ENCODE measurements at regions of chr15 and their contacts with region 1.

Region 1: DNA sequence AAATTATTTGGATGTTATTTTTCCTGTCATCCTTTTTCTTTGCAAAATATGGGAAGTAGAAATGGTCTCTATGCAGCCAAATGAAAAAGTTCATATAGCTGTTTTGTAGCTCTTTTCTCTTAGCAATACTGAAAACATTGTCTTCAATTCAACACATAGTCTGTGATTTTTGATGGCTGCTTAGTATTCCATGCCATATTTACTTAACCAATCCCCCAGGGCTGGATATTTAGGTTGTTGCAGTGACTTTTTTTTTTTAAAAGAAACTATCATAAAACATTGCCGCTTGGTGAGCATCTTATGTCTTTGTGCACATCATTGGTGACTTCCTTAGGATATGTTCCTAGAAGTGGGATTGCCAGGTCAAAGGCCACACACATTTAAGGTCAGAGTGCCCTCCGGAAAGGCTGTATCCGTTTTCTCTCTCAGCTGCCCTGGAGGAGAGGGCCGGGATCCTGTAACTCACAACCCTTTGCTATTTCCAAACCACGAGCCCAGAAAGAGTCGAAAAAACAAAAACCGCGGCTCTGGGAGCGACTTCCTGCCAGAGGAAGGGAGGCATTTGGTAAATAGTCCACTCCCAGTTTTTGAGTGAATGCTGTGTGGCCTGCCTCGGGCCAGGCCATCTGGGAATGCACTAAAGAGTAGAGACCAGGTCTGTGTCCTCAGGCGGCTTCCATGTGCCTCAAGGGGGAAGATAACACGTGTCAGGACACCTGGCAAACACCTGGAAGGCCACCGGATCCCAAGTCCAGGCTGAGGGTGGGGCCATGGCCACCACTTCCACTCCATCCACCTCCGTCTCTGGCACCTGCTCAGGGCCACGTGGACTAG is 41.9 kb downstream of the SMAD6 start:
- DNase-seq: no peak
- H3K27ac ChIP-seq: no peak overlapping the region
- CTCF ChIP-seq: no peak

Region 2: GRCh38 chr15:66472176-66472999 is 271.5 kb before region 1 on chr15:
- CTCF ChIA-PET with region 1: no interaction called
- POLR2A ChIA-PET with region 1: no interaction called
- DNase-seq: no peak
- H3K27ac ChIP-seq: no peak overlapping the region
- CTCF ChIP-seq: no peak

Region 3: GRCh38 chr15:66756295-66756694 is 12.4 kb after region 1 on chr15:
- CTCF ChIA-PET with region 1: interaction called, 10 read pairs
- POLR2A ChIA-PET with region 1: no interaction called
- DNase-seq: no peak
- H3K27ac ChIP-seq: no peak overlapping the region
- CTCF ChIP-seq: no peak

Region 4: DNA sequence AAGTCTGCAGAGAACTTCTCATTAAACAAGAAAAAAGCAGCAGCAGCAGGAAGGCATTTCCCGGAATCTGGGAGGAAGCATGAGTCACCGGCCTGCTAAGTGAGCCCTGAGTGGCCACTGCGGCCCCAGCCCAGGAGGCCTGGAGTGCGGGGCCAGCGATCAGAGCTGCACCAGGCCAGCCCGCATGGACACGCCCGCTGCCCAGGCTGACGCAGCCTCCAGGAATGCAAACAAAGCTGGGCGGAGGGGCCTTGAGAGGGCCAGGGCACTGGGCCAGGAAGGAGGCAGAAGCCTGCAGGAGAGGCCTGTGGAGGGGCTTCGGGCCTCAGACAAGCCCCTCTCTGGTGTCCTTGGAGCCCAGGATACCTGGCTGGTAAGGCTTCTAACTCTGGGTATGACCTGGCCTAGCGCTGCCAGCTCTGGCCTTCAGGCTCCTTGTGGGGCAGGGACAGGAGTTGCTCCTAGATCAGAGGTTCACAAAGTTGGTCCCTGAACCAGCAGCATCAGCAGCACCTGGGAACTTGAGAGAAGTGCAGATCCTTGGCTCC is 59.3 kb after region 1 on chr15:
- CTCF ChIA-PET with region 1: no interaction called
- POLR2A ChIA-PET with region 1: no interaction called
- DNase-seq: peak; percentile 96
- H3K27ac ChIP-seq: peak overlapping the region; percentile 93
- CTCF ChIP-seq: no peak